Naive thymus-derived CD4-positive, alpha-beta T cell (primary cell): ENCODE measurements at regions of chr7 and their contacts with region 1.

Region 1: GRCh38 chr7:27196287-27196767 is 3.6 kb downstream of the HOXA13 start:
- DNase-seq: peak; percentile 62 to 82 (median 72)
- ATAC-seq: peak; percentile 55
- H3K4me3 ChIP-seq: no peak overlapping the region
- H3K4me3 Mint-ChIP-seq: no peak overlapping the region
- H3K27ac ChIP-seq: no peak overlapping the region
- H3K27ac Mint-ChIP-seq: peak overlapping the region in 2 of 9 donors; percentile 69
- H3K4me1 ChIP-seq: peaks cover 19 to 34% of the 10 kb centered on the region in 2 donors
- H3K4me1 Mint-ChIP-seq: peaks cover 9 to 47% (median 36%) of the 10 kb centered on the region in 7 donors
- H3K27me3 ChIP-seq: peaks cover 37 to 69% of the 10 kb centered on the region in 2 donors
- H3K27me3 Mint-ChIP-seq: peaks cover 78 to 85% (median 80%) of the 10 kb centered on the region in 5 donors

Region 2: DNA sequence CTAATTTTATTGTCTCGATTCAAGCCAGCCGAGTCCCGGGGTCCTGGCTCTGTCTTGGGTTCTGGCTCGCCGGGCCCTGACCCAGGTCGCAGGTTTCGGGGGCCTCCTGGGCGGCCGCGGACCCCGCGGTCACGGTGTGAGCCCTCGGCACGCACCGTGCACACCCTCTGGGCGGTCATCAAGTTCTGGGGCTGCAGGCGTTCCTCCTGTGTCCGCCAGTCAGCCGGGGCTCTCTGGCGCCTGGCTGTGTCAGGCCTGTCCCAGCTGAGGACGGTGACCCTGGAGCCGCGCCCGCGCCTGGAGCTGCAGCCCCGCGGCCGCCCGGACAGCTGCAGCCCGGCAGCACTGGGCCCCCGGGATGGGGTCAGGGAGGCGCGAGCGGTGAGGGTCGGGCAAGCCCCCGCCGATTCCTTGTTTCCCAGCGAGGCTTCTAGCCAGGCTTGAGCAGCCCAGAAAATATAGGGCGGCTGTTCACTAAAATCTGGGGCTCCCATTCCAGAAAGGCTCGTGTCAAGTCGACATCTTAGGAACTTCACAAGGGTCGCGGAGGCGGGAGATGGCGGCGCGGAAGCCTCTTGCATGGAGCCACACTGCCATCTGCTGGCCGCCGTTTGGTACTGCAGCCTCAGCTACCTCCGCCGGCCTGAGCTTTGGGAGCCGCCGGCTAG is 35.6 kb before region 1 on chr7:
- CTCF ChIA-PET with region 1: interaction called, 3 read pairs
- POLR2A ChIA-PET with region 1: no interaction called
- intact Hi-C with region 1: loop called in 1 of 2 experiments (anchors 5 kb)
- DNase-seq: peak; percentile 69 to 89 (median 84)
- ATAC-seq: peak; percentile 91
- H3K4me3 ChIP-seq: peak overlapping the region; percentile 81
- H3K4me3 Mint-ChIP-seq: peak overlapping the region; percentile 71 to 88 (median 80)
- H3K27ac ChIP-seq: no peak overlapping the region
- H3K27ac Mint-ChIP-seq: peak overlapping the region in 1 of 9 donors; percentile 33
- H3K4me1 ChIP-seq: peaks cover 24 to 38% of the 10 kb centered on the region in 2 donors
- H3K4me1 Mint-ChIP-seq: peaks cover 15 to 52% (median 34%) of the 10 kb centered on the region in 7 donors
- H3K27me3 ChIP-seq: peaks cover 27 to 61% of the 10 kb centered on the region in 2 donors
- H3K27me3 Mint-ChIP-seq: peaks cover 62 to 89% (median 77%) of the 10 kb centered on the region in 5 donors

Region 3: DNA sequence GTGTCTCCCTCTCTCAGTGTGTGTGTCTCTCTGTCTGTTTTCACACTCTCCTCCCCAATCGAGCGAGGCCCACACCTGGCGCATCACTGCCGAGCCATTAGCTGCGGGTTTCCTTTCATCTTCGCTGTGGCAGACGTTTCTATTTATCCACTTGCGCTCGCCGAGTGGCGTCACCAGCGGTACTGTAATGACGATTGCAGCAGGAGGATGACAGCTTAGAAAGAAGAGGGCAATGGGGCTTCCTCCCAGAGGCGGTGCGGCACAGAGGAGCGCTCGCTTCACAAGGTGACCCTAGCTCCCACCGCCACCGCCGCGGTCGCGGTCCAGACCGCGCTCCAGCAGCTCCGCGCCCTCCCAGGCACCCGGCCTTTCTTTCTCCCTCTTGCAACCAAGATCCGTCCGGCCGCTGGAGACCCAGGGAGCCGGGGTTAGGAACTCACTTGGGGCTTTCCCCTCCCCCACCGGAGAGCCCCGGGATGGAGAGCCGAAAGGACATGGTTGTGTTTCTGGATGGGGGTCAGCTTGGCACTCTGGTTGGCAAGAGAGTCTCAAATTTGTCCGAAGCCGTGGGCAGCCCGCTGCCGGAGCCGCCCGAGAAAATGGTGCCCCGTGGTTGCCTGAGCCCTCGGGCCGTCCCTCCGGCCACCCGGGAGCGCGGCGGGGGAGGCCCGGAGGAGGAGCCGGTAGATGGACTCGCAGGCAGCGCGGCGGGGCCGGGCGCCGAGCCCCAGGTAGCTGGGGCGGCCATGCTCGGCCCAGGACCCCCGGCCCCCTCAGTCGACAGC is 46.4 kb after region 1 on chr7 and contains the start of gene EVX1:
- CTCF ChIA-PET with region 1: no interaction called
- POLR2A ChIA-PET with region 1: no interaction called
- intact Hi-C with region 1: loop called in 1 of 2 experiments (anchors 5 kb)
- DNase-seq: peak in 7 of 9 donors; percentile 29 to 74 (median 52)
- ATAC-seq: peak; percentile 60
- H3K4me3 ChIP-seq: no peak within 1 kb of the TSS
- H3K4me3 Mint-ChIP-seq: peak within 1 kb of the TSS in 9 of 10 donors; percentile 32 to 81 (median 57)
- H3K27ac ChIP-seq: no peak within 1 kb of the TSS
- H3K27ac Mint-ChIP-seq: peak within 1 kb of the TSS in 6 of 9 donors; percentile 40 to 84 (median 62)
- H3K4me1 ChIP-seq: peaks cover 0 to 3% of the 10 kb centered on the region in 2 donors
- H3K4me1 Mint-ChIP-seq: peaks cover 4 to 52% (median 46%) of the 10 kb centered on the region in 7 donors
- H3K27me3 ChIP-seq: peaks cover 0 to 37% of the 10 kb centered on the region in 2 donors
- H3K27me3 Mint-ChIP-seq: peaks cover 70 to 88% (median 81%) of the 10 kb centered on the region in 5 donors
- total RNA-seq, gene EVX1: 0.11 TPM in 1 of 5 experiments, not detected in the others

Region 4: DNA sequence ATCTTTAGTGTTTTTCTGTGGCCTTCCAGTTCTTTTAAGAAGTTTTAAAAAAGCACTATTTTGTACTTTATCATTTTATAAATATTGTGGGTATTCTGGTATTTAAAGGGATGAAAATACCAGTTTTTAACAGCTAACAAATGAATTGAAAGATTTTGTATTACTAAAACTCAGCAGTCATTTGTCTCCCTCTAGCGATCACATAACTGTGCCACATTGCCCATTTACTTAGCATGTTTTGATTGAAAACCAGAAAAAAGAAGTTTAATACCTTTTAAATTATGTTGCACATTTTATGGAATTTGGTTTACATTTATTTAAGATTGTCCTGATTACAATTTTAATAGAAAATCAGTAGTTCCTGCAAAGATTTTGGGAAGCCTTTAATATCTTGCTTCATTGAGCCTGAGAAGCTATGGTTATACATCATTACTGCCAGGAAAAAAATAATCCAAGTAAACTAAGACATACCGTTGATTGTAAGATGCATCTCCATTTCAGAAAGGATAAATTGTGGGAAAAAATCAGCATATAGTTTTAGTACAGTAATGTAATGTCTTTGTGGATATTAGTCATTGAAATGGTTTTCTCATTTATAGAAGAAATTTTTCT is 578.5 kb after region 1 on chr7:
- CTCF ChIA-PET with region 1: interaction called, 3 read pairs
- POLR2A ChIA-PET with region 1: no interaction called
- intact Hi-C with region 1: loop called (anchors 1 to 2 kb)
- DNase-seq: peak in 4 of 9 donors; percentile 6 to 21 (median 15)
- ATAC-seq: no peak
- H3K4me3 ChIP-seq: no peak overlapping the region
- H3K4me3 Mint-ChIP-seq: no peak overlapping the region
- H3K27ac ChIP-seq: no peak overlapping the region
- H3K27ac Mint-ChIP-seq: no peak overlapping the region
- H3K4me1 ChIP-seq: no peaks in the 10 kb centered on the region
- H3K4me1 Mint-ChIP-seq: peaks cover 6 to 72% (median 49%) of the 10 kb centered on the region in 7 donors
- H3K27me3 ChIP-seq: no peaks in the 10 kb centered on the region
- H3K27me3 Mint-ChIP-seq: no peaks in the 10 kb centered on the region

Region 5: GRCh38 chr7:27933671-27934565 is 737.6 kb after region 1 on chr7:
- CTCF ChIA-PET with region 1: interaction called, 3 read pairs
- POLR2A ChIA-PET with region 1: no interaction called
- intact Hi-C with region 1: loop called in 1 of 2 experiments (anchors 1 kb)
- DNase-seq: no peak
- ATAC-seq: no peak
- H3K4me3 ChIP-seq: no peak overlapping the region
- H3K4me3 Mint-ChIP-seq: no peak overlapping the region
- H3K27ac ChIP-seq: no peak overlapping the region
- H3K27ac Mint-ChIP-seq: no peak overlapping the region
- H3K4me1 ChIP-seq: no peaks in the 10 kb centered on the region
- H3K4me1 Mint-ChIP-seq: peaks cover 0 to 2% (median 0%) of the 10 kb centered on the region in 7 donors
- H3K27me3 ChIP-seq: no peaks in the 10 kb centered on the region
- H3K27me3 Mint-ChIP-seq: peaks cover 0 to 3% (median 0%) of the 10 kb centered on the region in 5 donors

Region 6: DNA sequence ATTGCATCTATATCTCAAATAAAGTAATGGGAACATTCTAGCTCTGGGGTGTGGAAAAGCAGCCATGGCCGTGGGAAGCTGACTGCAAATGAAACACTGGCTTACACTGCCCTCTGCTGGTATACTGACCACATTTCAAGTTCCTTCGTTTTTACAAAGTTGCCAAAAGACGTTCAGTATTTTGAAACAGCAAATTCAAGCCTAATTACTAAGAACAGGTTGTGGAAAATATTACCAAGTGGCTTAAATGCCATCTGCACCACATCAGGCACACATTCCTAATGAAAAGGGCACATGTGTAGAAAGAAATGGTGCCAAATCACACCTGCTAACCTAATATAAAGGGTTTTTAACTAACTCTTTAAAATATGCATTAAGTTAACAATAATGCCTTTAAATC is 900.4 kb after region 1 on chr7:
- CTCF ChIA-PET with region 1: interaction called, 8 read pairs
- POLR2A ChIA-PET with region 1: no interaction called
- intact Hi-C with region 1: loop called (anchors 1 kb)
- DNase-seq: peak in 7 of 9 donors; percentile 26 to 62 (median 47)
- ATAC-seq: peak; percentile 84
- H3K4me3 ChIP-seq: no peak overlapping the region
- H3K4me3 Mint-ChIP-seq: no peak overlapping the region
- H3K27ac ChIP-seq: no peak overlapping the region
- H3K27ac Mint-ChIP-seq: no peak overlapping the region
- H3K4me1 ChIP-seq: no peaks in the 10 kb centered on the region
- H3K4me1 Mint-ChIP-seq: peaks cover 0 to 25% (median 10%) of the 10 kb centered on the region in 7 donors
- H3K27me3 ChIP-seq: no peaks in the 10 kb centered on the region
- H3K27me3 Mint-ChIP-seq: no peaks in the 10 kb centered on the region

Region 7: GRCh38 chr7:28853834-28854749 is 1657.8 kb after region 1 on chr7:
- CTCF ChIA-PET with region 1: no interaction called
- POLR2A ChIA-PET with region 1: no interaction called
- intact Hi-C with region 1: loop called in 1 of 2 experiments (anchors 10 kb)
- DNase-seq: peak; percentile 20 to 77 (median 56)
- ATAC-seq: peak; percentile 92
- H3K4me3 ChIP-seq: no peak overlapping the region
- H3K4me3 Mint-ChIP-seq: peak overlapping the region; percentile 67 to 90 (median 82)
- H3K27ac ChIP-seq: no peak overlapping the region
- H3K27ac Mint-ChIP-seq: peak overlapping the region in 1 of 9 donors; percentile 41
- H3K4me1 ChIP-seq: no peaks in the 10 kb centered on the region
- H3K4me1 Mint-ChIP-seq: peaks cover 6 to 12% (median 11%) of the 10 kb centered on the region in 7 donors
- H3K27me3 ChIP-seq: peaks cover 0 to 11% of the 10 kb centered on the region in 2 donors
- H3K27me3 Mint-ChIP-seq: peaks cover 51 to 71% (median 68%) of the 10 kb centered on the region in 5 donors